Dendritic cell treated with granulocyte-macrophage colony-stimulating factor and Interleukin-4, amounts not matched to agents 40 ng/mL and 50 ng/mL, for 4 days (primary cell): ENCODE measurements at regions of chr16 and their contacts with region 1.

Region 1: GRCh38 chr16:23595951-23596720 is at the start of gene NDUFAB1:
- H3K4me3 Mint-ChIP-seq: peak within 1 kb of the TSS; percentile 81
- H3K27ac Mint-ChIP-seq: peak within 1 kb of the TSS; percentile 80
- H3K4me1 Mint-ChIP-seq: peaks cover 31% of the 10 kb centered on the region
- H3K27me3 Mint-ChIP-seq: no peaks in the 10 kb centered on the region

Region 2: GRCh38 chr16:23510164-23510914 is 85.8 kb before region 1 on chr16 and contains the start of gene GGA2:
- intact Hi-C with region 1: loop called (anchors 10 kb)
- H3K4me3 Mint-ChIP-seq: peak within 1 kb of the TSS; percentile 83
- H3K27ac Mint-ChIP-seq: peak within 1 kb of the TSS; percentile 76
- H3K4me1 Mint-ChIP-seq: peaks cover 45% of the 10 kb centered on the region
- H3K27me3 Mint-ChIP-seq: no peaks in the 10 kb centered on the region

Region 3: DNA sequence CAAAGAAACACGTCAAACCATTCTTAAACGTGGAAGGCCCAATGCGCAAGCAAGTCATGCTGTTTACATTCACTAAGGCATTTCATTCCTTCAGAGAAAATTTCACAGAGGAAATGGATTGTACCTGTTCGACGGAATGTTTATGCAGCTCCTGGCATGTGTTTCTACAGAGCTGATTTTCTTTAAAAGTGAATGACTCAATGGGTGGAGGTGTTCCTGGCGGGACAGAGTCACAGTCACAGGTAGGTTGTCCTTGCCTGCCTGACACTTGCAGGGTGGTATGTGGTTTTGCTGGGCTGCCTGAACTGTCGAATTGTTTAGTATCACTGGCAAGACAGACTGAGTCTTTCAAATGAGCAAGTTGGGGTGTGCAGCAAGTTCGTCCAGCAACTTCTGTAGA is 33.4 kb after region 1 on chr16:
- intact Hi-C with region 1: no loop called
- H3K4me3 Mint-ChIP-seq: no peak overlapping the region
- H3K27ac Mint-ChIP-seq: no peak overlapping the region
- H3K4me1 Mint-ChIP-seq: no peaks in the 10 kb centered on the region
- H3K27me3 Mint-ChIP-seq: no peaks in the 10 kb centered on the region